Calu3 (cell line): ENCODE measurements at regions of chrX and their contacts with region 1.

Region 1: DNA sequence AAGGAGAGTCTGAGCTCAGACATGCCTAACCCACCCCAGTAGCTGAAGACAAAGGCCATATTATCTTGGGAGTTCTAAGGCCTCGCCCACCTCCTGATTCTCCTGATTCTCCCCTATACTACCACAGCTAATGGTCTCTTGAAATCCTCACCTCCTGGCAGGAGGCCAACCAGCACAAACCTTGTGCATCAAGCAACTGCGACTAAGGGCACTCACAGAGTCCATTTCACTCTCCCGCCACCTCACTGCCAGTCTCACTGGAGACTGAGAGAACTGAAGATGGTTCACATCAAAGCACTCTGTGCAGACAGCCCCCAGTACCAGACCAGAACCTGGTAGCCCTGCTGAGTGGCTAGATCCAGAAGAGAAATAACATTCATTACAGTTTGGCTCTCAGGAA is 102.1 kb upstream of the KLF8 start:
- DNase-seq: peak; percentile 55
- H3K4me3 Mint-ChIP-seq: peak overlapping the region; percentile 41
- H3K27ac Mint-ChIP-seq: peak overlapping the region; percentile 82
- H3K4me1 Mint-ChIP-seq: peaks cover 64% of the 10 kb centered on the region
- H3K27me3 Mint-ChIP-seq: no peaks in the 10 kb centered on the region
- CTCF ChIP-seq: no peak

Region 2: DNA sequence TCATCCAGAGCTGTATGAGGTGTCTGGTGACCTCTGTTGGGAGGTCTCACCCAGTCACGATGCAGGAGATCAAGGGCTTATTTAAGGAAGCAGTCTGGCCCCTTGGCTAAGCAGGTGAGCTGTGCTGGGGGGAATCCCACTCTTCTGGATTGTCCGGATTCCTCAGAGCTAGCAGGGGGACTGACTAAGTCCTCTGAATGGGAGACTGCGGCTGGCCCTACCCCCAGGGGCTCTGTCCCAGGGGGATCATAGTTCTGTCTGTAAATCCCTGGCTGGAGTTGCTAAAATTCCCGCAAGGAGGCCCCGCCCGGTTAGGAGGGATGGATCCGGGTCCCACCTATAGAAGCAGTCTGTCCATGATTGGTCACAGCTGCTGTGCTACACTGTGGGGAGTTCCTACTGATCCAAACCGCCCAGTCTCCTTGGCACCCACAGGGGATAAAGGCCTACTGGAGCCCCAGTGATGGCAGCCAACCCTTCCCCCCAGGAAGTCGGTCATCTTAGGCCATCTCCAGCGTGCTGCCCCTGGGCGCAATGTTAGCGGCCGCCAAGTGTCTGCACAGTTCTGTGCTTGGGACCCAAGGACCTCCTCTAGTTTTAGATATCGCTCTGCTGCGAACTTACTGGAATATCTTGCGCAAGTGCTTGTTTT is 16.1 kb before region 1 on chrX:
- CTCF ChIA-PET with region 1: interaction called, 3 read pairs
- intact Hi-C with region 1: loop called (anchors 1 kb)
- DNase-seq: peak; percentile 84
- H3K4me3 Mint-ChIP-seq: peak overlapping the region; percentile 24
- H3K27ac Mint-ChIP-seq: peak overlapping the region; percentile 81
- H3K4me1 Mint-ChIP-seq: peaks cover 6% of the 10 kb centered on the region
- H3K27me3 Mint-ChIP-seq: no peaks in the 10 kb centered on the region
- CTCF ChIP-seq: no peak